Left ventricle myocardium inferior (tissue), 1 donor: ENCODE measurements at regions of chr9 and their contacts with region 1.

Region 1: DNA sequence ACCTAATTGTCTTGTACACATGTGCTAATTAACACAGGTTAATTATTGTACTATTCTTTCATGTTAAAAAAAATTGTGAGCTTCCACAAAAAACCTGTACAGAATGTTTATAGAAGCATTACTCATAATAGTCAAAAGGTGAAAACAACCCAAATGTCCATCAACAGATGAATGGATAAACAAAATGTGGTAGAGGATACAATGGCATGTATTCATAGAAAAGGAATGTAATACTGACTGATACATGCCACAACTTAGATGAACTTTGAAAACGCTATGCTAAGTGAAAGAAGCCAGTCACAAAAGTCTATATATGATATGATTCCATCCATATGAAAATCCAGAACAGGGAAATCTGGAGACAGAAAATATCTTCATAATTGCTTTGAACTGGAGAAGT is 25.6 kb downstream of the RRAGA start:
- DNase-seq: no peak
- H3K4me3 ChIP-seq: no peak overlapping the region
- H3K27ac ChIP-seq: no peak overlapping the region
- H3K4me1 ChIP-seq: no peaks in the 10 kb centered on the region
- H3K27me3 ChIP-seq: no peaks in the 10 kb centered on the region
- CTCF ChIP-seq: no peak

Region 2: DNA sequence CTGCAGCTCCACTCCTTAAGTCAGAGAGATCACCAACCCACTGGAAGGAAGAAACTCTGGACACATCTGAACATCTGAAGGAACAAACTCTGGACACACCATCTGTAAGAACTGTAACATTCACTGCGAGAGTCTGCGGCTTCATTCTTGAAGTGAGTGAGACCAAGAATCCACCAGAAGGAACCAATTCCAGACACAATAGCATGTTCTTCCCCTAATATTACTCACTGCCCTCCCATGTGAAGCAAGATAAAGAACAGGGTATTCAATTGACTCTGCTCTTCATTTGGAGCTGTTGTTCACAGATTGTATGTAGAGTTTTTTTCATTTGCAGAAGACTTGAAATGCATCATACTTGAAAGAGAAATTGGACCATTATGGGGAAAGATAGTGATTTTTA is 52.6 kb before region 1 on chr9:
- intact Hi-C with region 1: no loop called
- DNase-seq: no peak
- H3K4me3 ChIP-seq: no peak overlapping the region
- H3K27ac ChIP-seq: no peak overlapping the region
- H3K4me1 ChIP-seq: no peaks in the 10 kb centered on the region
- H3K27me3 ChIP-seq: no peaks in the 10 kb centered on the region
- CTCF ChIP-seq: no peak

Region 3: DNA sequence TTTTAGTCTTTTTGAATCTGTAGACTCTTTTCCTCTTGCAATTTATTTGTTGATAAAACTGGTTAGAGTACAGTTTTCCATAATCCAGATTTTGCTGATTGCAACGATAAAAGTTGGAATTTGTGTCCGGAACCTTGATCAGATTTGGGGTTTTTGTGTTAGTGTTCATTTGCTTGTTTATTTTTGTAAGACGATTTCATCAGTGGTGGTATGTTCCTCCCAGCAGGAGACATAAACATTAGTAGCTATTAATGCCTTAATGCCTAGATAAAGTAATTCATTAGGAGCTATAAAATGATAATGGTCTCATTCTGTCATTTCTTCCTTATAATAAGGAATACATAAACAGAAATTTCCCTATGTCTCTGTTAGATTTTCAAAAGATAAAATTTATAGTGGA is 283.9 kb after region 1 on chr9:
- intact Hi-C with region 1: loop called (anchors 10 kb)
- DNase-seq: no peak
- H3K4me3 ChIP-seq: no peak overlapping the region
- H3K27ac ChIP-seq: no peak overlapping the region
- H3K4me1 ChIP-seq: no peaks in the 10 kb centered on the region
- H3K27me3 ChIP-seq: no peaks in the 10 kb centered on the region
- CTCF ChIP-seq: no peak